GM10248 (cell line): ENCODE measurements at regions of chr1 and their contacts with region 1.

Region 1: DNA sequence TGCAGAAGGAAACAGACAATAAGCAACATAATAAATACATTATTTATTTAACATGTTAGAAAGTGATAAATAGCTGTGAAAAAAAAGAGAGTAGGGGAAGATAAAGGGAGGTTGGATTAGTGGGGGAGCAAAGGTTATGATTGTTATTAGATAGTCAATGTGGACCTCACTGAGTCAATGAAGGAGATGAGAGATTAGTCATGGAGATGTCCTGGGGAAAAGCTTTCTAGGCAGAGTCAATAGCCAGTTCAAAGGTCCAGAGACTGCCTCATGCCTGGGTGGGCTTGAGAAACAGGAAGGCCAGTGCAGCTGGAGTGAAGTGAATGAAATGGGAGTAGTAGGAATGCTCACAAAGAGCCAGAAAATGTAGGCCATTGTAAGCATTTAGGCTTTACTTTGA is 187.1 kb upstream of the CACYBP start:
- DNase-seq: no peak
- CTCF ChIP-seq: no peak

Region 2: DNA sequence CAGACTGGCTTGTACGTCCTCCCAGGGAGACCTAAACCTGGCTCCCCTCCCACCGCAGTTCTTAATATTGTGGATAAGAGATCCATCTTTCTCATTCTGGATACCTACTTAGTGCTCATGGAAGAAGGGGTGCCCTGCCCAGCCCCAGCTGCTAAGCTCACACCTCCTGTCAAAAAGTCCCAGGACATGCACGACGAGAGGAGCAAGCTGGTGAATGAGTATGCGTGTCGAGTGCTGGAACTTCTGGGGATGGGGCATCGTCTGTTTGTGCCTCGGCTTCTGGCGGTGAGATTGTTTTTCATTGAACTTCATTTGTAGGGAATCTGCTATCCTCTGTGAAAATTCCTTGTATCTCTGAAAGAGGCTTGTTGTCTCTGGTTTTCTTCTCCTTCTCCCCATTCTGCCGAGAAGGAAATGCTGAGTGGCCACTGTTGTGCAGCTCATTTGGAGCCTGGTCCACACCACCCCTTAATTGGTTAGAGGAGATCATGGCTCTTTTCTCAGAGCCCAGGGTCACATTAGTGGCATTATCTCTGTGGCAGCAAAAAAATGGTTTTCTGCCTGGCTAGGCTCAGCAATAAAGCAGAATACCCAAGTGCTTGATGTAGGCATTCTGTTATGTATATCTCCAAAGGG is 12.3 kb before region 1 on chr1:
- CTCF ChIA-PET with region 1: interaction called, 18 read pairs
- POLR2A ChIA-PET with region 1: interaction called, 14 read pairs
- DNase-seq: no peak
- CTCF ChIP-seq: no peak